Heart right ventricle (tissue), 16 donors: ENCODE measurements at regions of chr11 and their contacts with region 1.

Region 1: GRCh38 chr11:6353367-6353987 is 33.2 kb upstream of the CAVIN3 start:
- DNase-seq: peak in 1 of 2 donors; percentile 40
- ATAC-seq: peak; percentile 51 to 78 (median 64)
- H3K4me3 ChIP-seq: no peak overlapping the region
- H3K27ac ChIP-seq: no peak overlapping the region
- H3K4me1 ChIP-seq: peaks cover 0 to 19% (median 5%) of the 10 kb centered on the region in 9 donors
- H3K27me3 ChIP-seq: no peaks in the 10 kb centered on the region
- CTCF ChIP-seq: peak; percentile 86 to 99 (median 96)

Region 2: GRCh38 chr11:6022956-6023355 is 330.5 kb before region 1 on chr11:
- intact Hi-C with region 1: loop called in 9 of 10 experiments (anchors 2 to 5 kb)
- DNase-seq: peak in 1 of 2 donors; percentile 51
- ATAC-seq: peak in 7 of 8 donors; percentile 65 to 83 (median 73)
- H3K4me3 ChIP-seq: no peak overlapping the region
- H3K27ac ChIP-seq: no peak overlapping the region
- H3K4me1 ChIP-seq: no peaks in the 10 kb centered on the region
- H3K27me3 ChIP-seq: no peaks in the 10 kb centered on the region
- CTCF ChIP-seq: peak; percentile 18 to 82 (median 66)

Region 3: DNA sequence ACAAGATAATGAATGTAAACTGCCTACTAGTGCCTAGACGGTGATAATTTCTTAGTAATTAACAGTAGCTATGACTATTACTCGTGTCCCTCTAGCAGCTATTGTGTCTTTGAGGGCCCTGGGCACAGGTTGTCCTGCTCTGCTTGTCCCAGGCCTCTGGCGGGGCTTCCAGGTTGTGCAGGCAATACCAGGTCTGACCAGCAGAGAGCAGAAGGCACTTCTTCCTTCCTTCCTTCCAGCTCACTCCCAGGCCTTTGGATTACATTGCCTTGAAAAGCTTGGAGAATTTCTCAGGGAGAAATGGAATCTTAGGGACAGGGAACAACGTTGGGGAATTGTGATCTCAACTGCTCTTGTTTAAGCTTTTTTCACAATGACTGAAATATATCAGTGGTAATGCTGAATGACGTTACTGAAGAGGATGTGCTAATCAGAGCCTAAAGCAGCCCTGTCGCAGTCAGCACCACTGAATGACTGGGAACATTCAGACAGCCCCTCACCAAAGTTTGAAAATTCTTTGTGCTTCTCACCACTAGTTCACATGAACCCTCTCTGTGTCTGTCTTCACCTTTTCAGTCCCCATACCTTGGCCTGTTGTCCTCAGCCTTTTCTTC is 102.2 kb before region 1 on chr11:
- intact Hi-C with region 1: loop called in 7 of 10 experiments (anchors 1 to 10 kb)
- DNase-seq: peak; percentile 58 to 66
- ATAC-seq: peak; percentile 82 to 95 (median 86)
- H3K4me3 ChIP-seq: no peak overlapping the region
- H3K27ac ChIP-seq: peak overlapping the region in 4 of 10 donors; percentile 20 to 43 (median 32)
- H3K4me1 ChIP-seq: peaks cover 0 to 27% (median 6%) of the 10 kb centered on the region in 9 donors
- H3K27me3 ChIP-seq: peaks cover 0 to 7% (median 0%) of the 10 kb centered on the region in 7 donors
- CTCF ChIP-seq: peak; percentile 46 to 86 (median 77)

Region 4: DNA sequence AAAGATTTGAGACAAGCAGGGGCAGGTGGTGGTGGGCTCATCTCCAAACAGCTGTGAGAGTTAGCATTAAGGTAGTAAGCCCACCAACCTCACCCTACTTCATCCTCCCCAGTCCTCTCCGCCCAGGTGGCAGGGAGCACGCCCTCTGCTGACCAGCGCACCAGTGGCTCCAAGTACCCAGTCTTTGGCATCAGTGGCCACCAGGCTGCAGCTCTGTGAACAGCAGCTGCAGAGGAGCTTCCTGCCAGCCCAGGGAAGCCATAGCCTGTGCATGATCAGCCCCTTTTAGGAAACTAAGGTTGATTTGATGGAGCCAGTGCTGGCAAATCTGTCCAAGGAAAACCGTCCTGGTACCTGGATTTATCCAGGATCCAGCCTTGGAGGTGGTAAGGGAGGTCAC is 54.9 kb before region 1 on chr11:
- intact Hi-C with region 1: loop called in 7 of 10 experiments (anchors 1 to 10 kb)
- DNase-seq: peak; percentile 33 to 54
- ATAC-seq: peak in 6 of 8 donors; percentile 43 to 88 (median 74)
- H3K4me3 ChIP-seq: no peak overlapping the region
- H3K27ac ChIP-seq: no peak overlapping the region
- H3K4me1 ChIP-seq: no peaks in the 10 kb centered on the region
- H3K27me3 ChIP-seq: no peaks in the 10 kb centered on the region
- CTCF ChIP-seq: peak; percentile 19 to 75 (median 64)

Region 5: GRCh38 chr11:6303661-6304060 is 49.8 kb before region 1 on chr11:
- intact Hi-C with region 1: loop called in 7 of 10 experiments (anchors 1 to 10 kb)
- DNase-seq: no peak
- ATAC-seq: no peak
- H3K4me3 ChIP-seq: no peak overlapping the region
- H3K27ac ChIP-seq: no peak overlapping the region
- H3K4me1 ChIP-seq: no peaks in the 10 kb centered on the region
- H3K27me3 ChIP-seq: peaks cover 0 to 4% (median 0%) of the 10 kb centered on the region in 7 donors
- CTCF ChIP-seq: no peak

Region 6: DNA sequence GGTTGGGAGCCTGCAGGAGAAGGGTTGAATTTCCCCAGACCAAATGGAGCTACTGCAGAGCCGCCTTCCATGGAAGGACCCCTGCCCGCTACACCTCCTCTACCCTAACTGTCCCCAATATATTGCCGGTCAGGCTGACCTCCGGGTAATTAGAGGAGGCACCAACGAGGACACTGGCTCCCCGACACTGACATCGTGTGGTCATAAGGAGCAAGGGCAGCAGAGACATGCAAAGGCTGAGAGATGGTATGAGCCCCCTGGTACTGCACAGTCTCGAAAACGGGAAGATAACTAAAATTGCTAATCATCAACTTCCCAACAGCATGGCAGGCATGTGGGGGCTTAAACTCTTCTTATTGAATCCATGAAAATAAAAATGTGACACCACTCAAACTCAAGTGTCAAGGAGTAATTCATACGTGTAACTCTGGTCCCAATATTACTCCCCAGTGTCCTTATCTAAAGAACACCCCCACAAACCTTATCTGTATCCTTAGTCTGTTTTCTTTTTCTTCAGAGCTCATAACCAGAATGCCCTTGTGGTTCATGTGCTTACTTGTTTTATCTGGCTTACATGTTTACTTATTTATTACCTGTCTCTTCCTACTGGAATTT is 37.6 kb before region 1 on chr11:
- intact Hi-C with region 1: loop called in 9 of 10 experiments (anchors 5 kb)
- DNase-seq: peak; percentile 49 to 51
- ATAC-seq: peak in 3 of 8 donors; percentile 11 to 32 (median 17)
- H3K4me3 ChIP-seq: peak overlapping the region in 5 of 10 donors; percentile 15 to 33 (median 22)
- H3K27ac ChIP-seq: peak overlapping the region in 5 of 10 donors; percentile 1 to 100 (median 33)
- H3K4me1 ChIP-seq: peaks cover 6 to 52% (median 33%) of the 10 kb centered on the region in 9 donors
- H3K27me3 ChIP-seq: peaks cover 0 to 21% (median 0%) of the 10 kb centered on the region in 7 donors
- CTCF ChIP-seq: peak; percentile 77 to 94 (median 88)